ENCODE measurements at regions of chr9 and their contacts with region 1.

Region 1: GRCh38 chr9:114385412-114386181 is 2.2 kb downstream of the AKNA start:
- DNase-seq: peak; percentile 91 to 98 (median 97)
- H3K4me3 ChIP-seq: peak overlapping the region in 6 of 7 experiments; percentile 88 to 95 (median 90)
- H3K27ac ChIP-seq: peak overlapping the region; percentile 88 to 89
- H3K4me1 ChIP-seq: peaks cover 41 to 91% (median 85%) of the 10 kb centered on the region in 4 experiments
- H3K27me3 ChIP-seq: no peaks in the 10 kb centered on the region

Region 2: DNA sequence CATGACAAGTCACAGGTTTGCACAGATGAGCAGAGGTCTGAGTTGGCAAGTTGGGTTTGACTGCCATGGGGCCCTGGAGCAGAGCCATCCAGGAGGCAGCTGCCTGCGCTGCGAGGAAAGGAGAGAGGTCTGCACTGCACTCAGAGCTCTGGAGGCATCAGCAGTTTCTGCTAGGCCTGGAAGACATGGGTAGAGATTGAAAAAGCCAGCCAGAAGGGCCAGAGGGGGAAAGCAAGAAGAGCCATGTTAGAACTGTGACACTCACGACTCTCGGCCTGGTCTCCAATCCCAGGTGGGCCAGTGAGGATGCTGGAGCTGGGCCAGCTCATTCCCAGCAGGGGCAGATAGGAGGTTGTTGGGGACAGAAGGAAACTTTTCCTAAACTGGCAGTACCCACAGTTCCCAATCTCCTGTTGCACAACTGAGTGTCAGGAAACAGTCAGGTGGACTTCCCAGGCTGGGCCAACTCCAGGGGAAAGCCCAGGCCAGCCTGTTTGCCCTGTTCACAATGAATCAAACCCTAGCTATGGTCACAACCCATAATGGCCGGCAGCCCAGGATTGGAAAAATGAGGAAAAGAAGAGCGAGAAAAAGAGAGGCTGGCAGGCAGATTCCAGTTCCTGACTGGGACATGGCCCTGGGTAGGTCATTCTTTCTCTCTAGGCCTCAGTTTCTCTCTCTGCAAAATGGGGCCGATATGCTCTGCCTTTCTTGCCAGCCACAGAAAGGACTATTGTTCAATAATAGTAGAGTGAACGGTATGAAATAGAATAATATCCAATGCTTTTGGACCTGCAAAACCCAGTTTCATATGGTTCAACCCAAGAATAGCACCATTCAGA is 70.5 kb before region 1 on chr9:
- CTCF ChIA-PET with region 1: no interaction called
- POLR2A ChIA-PET with region 1: no interaction called
- DNase-seq: no peak
- H3K4me3 ChIP-seq: no peak overlapping the region
- H3K27ac ChIP-seq: no peak overlapping the region
- H3K4me1 ChIP-seq: no peaks in the 10 kb centered on the region
- H3K27me3 ChIP-seq: no peaks in the 10 kb centered on the region

Region 3: DNA sequence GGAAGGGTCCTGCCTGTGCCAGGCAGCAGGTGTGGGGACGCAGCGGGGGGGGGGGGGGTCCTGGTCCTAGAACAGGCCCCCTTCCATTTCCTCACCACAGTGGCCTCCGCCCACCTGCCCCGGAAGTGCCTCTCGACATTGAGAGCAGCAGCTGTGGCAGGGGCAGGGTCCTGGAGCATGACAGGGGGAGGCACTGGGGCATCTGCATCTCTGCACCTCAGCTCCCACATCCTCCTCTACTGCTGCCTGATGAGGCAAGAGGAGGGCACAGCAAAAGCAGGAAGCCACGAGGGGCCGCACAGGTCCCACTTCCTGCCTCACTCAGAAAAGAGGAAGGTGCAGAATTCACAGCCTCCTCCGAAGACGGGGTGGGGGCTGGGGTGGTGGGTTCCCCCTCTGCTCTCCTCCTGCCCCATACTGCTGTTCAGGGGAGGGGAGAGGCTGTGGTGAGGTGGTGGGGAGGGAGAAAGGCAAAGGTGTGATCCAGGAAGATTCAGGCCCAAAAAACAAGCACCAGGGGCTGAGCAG is 12.6 kb before region 1 on chr9:
- CTCF ChIA-PET with region 1: interaction called, 255 read pairs
- POLR2A ChIA-PET with region 1: interaction called, 21 read pairs
- DNase-seq: peak; percentile 96 to 100 (median 99)
- H3K4me3 ChIP-seq: peak overlapping the region in 5 of 7 experiments; percentile 6 to 61 (median 28)
- H3K27ac ChIP-seq: peak overlapping the region; percentile 77 to 89
- H3K4me1 ChIP-seq: peaks cover 31 to 89% (median 85%) of the 10 kb centered on the region in 4 experiments
- H3K27me3 ChIP-seq: no peaks in the 10 kb centered on the region

Measured in common myeloid progenitor, CD34-positive (primary cell).